ENCODE measurements at regions of chr4 and their contacts with region 1.

Region 1: DNA sequence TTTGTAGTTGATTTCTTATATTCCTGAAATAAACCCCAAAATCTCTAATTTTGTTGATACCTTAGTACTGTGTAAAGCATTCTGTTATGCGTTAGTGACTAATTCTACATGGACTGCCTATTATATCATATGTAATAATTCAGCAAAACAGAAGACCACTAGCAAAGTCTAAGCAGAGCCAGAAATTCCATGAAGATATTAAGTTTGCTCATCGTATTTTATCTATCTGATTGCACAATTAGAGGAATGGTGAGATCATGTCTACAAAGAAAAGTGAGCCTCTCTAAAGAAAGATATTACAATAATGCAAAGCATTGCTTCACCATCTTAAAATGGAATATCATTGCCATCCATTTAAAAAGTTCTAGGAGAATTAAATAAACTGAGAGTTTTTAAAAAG is 374.6 kb upstream of the SLC7A11 start:
- DNase-seq: no peak
- ATAC-seq: no peak
- H3K4me3 ChIP-seq: no peak overlapping the region
- H3K27ac ChIP-seq: no peak overlapping the region
- H3K4me1 ChIP-seq: no peaks in the 10 kb centered on the region
- H3K27me3 ChIP-seq: no peaks in the 10 kb centered on the region
- CTCF ChIP-seq: no peak
- EP300 ChIP-seq: no peak
- POLR2A ChIP-seq: no peak
- RAD21 ChIP-seq: no peak

Region 2: GRCh38 chr4:138555584-138555983 is 61.2 kb before region 1 on chr4:
- CTCF ChIA-PET with region 1: no interaction called
- POLR2A ChIA-PET with region 1: no interaction called
- RAD21 ChIA-PET with region 1: no interaction called
- SMC1A ChIA-PET with region 1: no interaction called
- in situ Hi-C with region 1: no loop called
- intact Hi-C with region 1: no loop called
- DNase-seq: no peak
- ATAC-seq: peak; percentile 87
- H3K4me3 ChIP-seq: no peak overlapping the region
- H3K27ac ChIP-seq: no peak overlapping the region
- H3K4me1 ChIP-seq: no peaks in the 10 kb centered on the region
- H3K27me3 ChIP-seq: no peaks in the 10 kb centered on the region
- CTCF ChIP-seq: peak; percentile 31 to 46 (median 41); a peak in 5 of 6 replicates
- EP300 ChIP-seq: no peak
- POLR2A ChIP-seq: no peak
- RAD21 ChIP-seq: peak; percentile 33; the same call in 1 of the 2 replicates

Region 3: GRCh38 chr4:138630666-138631065 is 13.9 kb after region 1 on chr4:
- CTCF ChIA-PET with region 1: interaction called, 5 read pairs
- POLR2A ChIA-PET with region 1: interaction called, 3 read pairs
- RAD21 ChIA-PET with region 1: interaction called, 4 read pairs
- SMC1A ChIA-PET with region 1: interaction called, 17 read pairs
- in situ Hi-C with region 1: no loop called
- intact Hi-C with region 1: no loop called
- DNase-seq: no peak
- ATAC-seq: no peak
- H3K4me3 ChIP-seq: no peak overlapping the region
- H3K27ac ChIP-seq: no peak overlapping the region
- H3K4me1 ChIP-seq: no peaks in the 10 kb centered on the region
- H3K27me3 ChIP-seq: peaks cover 0 to 4% of the 10 kb centered on the region in 2 experiments; a peak in 1 of 4 replicates
- CTCF ChIP-seq: no peak
- EP300 ChIP-seq: no peak
- POLR2A ChIP-seq: no peak
- RAD21 ChIP-seq: no peak